ENCODE measurements at regions of chr10 and their contacts with region 1.

Region 1: GRCh38 chr10:31644931-31645633 is 283.5 kb downstream of the ARHGAP12 start:
- DNase-seq: no peak

Region 2: DNA sequence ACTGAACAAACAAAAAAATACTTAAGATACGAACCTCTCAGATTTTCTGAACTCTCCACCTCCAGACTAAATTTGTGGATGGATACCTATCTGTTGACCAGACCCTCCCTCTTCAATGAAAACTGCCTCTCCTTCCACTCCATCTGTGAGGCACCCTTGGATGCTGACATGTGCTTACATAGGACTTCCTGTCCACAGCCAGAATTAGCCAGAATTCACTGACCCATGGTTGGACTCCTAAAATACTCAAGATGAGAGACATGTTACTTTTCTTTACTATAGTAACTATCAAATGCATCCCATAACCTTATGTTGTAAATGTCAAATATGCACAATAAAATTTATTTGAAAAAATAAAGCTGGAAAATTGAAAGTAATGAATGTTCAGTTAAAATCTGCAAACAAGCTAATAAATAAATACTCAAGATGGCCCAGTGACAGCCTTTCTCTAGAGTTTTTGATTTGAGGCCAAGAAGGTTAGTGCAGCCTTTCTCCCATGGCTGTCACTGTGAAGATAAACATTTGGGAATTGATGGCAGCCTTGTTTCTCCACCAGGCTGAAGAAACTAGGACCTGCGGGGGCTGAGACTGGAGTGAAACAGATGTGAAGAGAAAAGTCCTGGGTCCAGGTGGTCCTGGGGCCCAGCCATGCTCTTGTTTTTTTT is 39.1 kb before region 1 on chr10:
- intact Hi-C with region 1: no loop called
- DNase-seq: no peak

Region 3: GRCh38 chr10:31697271-31698180 is 52.4 kb after region 1 on chr10:
- intact Hi-C with region 1: loop called (anchors 5 kb)
- DNase-seq: peak; percentile 91